Heart left ventricle (tissue), 16 donors: ENCODE measurements at regions of chr11 and their contacts with region 1.

Region 1: DNA sequence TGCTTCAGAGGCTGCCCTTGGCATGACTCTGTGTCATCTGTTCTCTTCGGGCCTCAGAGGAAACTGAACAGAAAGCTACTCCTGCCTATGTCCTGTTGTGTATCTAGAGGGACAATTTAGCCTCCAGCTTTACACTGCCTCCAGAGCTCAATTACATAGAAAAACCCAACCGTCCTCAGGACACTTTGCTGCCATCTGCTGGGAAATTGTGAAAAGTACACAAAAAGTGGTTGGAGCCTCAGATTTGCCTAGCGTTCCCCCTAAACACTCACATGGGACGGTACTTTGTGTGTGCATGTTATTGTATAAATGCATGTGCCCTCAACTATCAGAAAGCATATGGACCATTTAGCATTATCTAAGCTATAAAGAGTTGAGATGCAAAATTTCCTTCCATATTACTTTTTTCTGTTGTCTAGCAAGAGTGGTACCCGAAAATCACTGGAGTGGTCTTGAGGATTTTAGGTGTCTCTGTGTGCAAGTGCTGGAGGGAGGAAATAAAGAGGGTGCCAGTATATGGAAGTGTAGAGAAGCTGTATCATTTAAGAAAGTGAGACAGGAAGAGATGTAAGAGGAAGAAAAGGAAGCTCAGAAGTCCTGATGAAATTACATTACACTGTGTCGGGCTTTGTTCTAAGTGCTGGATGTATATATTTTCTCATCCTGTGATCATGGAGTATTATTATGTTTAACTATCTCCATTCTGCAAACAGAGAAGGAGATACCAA is 8.7 kb upstream of the MS4A4E start:
- DNase-seq: no peak
- ATAC-seq: peak in 3 of 4 donors; percentile 55 to 62 (median 55)
- H3K4me3 ChIP-seq: no peak overlapping the region
- H3K27ac ChIP-seq: peak overlapping the region in 1 of 12 donors; percentile 77
- H3K4me1 ChIP-seq: peaks cover 0 to 24% (median 0%) of the 10 kb centered on the region in 12 donors
- H3K27me3 ChIP-seq: peaks cover 0 to 7% (median 0%) of the 10 kb centered on the region in 9 donors
- CTCF ChIP-seq: peak in 9 of 12 donors; percentile 17 to 73 (median 39)
- POLR2A ChIP-seq: no peak

Region 2: GRCh38 chr11:59615120-59615636 is 636.5 kb before region 1 on chr11:
- intact Hi-C with region 1: no loop called
- DNase-seq: peak; percentile 42 to 67 (median 50)
- ATAC-seq: no peak
- H3K4me3 ChIP-seq: peak overlapping the region; percentile 82 to 92 (median 86)
- H3K27ac ChIP-seq: peak overlapping the region; percentile 71 to 93 (median 89)
- H3K4me1 ChIP-seq: peaks cover 0 to 53% (median 42%) of the 10 kb centered on the region in 12 donors
- H3K27me3 ChIP-seq: no peaks in the 10 kb centered on the region
- CTCF ChIP-seq: peak in 2 of 12 donors; percentile 8 to 14
- POLR2A ChIP-seq: no peak

Region 3: DNA sequence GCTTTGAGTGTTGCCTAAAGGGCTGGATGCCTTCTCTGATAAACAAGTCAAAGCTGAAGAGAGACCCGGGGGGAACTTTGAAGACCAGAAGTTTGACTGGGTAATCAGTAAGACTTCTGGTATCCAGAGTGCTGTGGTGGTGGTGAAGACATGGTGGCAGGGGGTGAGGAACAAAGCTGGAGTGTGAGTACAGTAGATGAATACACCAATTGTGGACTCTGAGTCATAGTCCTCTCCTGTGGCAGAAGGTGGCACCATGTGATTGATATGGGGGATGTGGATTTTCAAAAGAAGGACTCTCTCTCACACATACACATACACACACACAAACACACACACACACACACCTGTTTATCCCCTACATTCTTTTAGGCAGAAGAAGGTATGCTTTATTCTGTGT is 81.1 kb before region 1 on chr11:
- intact Hi-C with region 1: loop called in 1 of 10 experiments (anchors 5 kb)
- DNase-seq: no peak
- ATAC-seq: no peak
- H3K4me3 ChIP-seq: no peak overlapping the region
- H3K27ac ChIP-seq: peak overlapping the region in 2 of 12 donors; percentile 27 to 37
- H3K4me1 ChIP-seq: peaks cover 0 to 40% (median 0%) of the 10 kb centered on the region in 12 donors
- H3K27me3 ChIP-seq: no peaks in the 10 kb centered on the region
- CTCF ChIP-seq: no peak
- POLR2A ChIP-seq: no peak

Region 4: DNA sequence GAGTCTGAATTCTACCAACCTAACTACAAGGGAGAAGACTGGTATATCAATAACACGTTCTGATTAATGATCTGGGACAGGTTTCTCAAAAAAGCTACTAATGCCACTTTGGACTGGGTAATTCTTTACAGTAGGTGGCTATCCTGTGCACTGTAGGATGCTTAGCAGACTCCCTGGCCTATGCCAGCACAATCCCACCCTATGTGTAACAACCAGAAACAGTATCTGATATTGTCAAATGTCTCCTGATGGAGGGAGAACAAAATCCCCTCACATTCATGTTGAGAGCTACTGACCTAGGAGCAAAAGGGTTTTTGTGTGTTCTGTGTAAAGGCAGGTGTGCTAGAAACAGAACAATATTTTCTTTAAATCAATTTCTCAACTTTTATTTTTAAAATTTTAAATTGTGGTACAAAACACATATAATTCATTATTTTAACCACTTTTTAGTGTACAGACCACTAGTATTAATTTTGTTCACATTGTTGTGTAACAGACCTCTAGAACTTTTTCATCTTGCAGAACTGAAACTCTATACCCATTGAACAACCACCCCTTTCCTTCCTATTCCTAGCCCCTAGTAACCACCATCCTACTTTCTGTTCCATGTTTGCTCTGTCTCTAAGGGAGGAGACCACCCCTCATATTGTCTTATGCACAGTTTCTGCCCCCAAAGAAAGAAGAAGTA is 66.7 kb before region 1 on chr11:
- intact Hi-C with region 1: no loop called
- DNase-seq: no peak
- ATAC-seq: peak; percentile 64 to 81 (median 70)
- H3K4me3 ChIP-seq: no peak overlapping the region
- H3K27ac ChIP-seq: peak overlapping the region in 3 of 12 donors; percentile 41 to 91 (median 57)
- H3K4me1 ChIP-seq: peaks cover 0 to 30% (median 0%) of the 10 kb centered on the region in 12 donors
- H3K27me3 ChIP-seq: no peaks in the 10 kb centered on the region
- CTCF ChIP-seq: no peak
- POLR2A ChIP-seq: no peak